Breast epithelium (tissue), 4 donors: ENCODE measurements at regions of chr9 and their contacts with region 1.

Region 1: GRCh38 chr9:82443312-82443711 is 454.7 kb downstream of the SPATA31D1 start:
- DNase-seq: no peak
- H3K4me3 ChIP-seq: no peak overlapping the region
- H3K27ac ChIP-seq: no peak overlapping the region
- H3K4me1 ChIP-seq: no peaks in the 10 kb centered on the region
- H3K27me3 ChIP-seq: no peaks in the 10 kb centered on the region
- CTCF ChIP-seq: no peak
- POLR2A ChIP-seq: no peak

Region 2: DNA sequence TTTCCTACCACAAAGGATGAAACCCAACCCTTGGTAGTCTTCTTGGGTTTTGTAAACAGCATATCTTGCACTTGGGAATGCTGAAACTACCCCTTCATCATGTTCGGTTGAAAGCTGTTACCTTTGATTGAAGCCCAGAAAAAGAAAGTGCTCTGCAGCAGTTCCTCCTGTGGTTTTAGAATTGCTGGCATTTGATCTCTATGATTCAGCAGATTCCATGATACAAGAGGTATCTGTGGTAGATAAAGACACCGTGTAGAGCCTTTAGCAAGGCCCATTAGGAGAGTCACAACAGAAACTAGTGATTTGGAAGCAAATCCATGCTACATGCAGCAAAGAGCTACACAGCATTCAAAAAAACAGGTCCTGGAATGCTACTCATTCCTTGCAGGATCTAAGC is 1311.0 kb before region 1 on chr9:
- intact Hi-C with region 1: no loop called
- DNase-seq: no peak
- H3K4me3 ChIP-seq: no peak overlapping the region
- H3K27ac ChIP-seq: no peak overlapping the region
- H3K4me1 ChIP-seq: no peaks in the 10 kb centered on the region
- H3K27me3 ChIP-seq: no peaks in the 10 kb centered on the region
- CTCF ChIP-seq: no peak
- POLR2A ChIP-seq: no peak

Region 3: DNA sequence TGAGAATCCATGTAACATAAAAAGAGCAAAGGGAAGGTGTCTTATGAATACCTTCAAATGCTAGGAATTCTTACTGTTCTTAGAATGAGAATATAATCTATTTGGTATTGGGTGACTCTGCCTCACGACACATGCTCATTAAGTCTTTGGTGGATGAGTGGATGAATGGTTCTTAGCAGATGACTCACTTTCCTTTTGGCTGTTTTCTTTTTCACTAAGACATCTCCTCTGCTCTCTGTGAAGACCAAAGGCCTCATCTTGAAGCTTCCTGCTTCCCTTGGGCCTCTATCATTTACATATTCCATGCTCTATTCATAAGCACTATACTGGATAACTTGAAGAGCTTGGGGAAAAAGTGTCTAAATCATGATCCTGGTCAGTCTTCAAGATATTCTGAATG is 13.3 kb after region 1 on chr9:
- intact Hi-C with region 1: no loop called
- DNase-seq: no peak
- H3K4me3 ChIP-seq: no peak overlapping the region
- H3K27ac ChIP-seq: no peak overlapping the region
- H3K4me1 ChIP-seq: no peaks in the 10 kb centered on the region
- H3K27me3 ChIP-seq: no peaks in the 10 kb centered on the region
- CTCF ChIP-seq: no peak
- POLR2A ChIP-seq: no peak

Region 4: GRCh38 chr9:82475584-82476301 is 32.4 kb after region 1 on chr9:
- intact Hi-C with region 1: loop called (anchors 2 kb)
- DNase-seq: no peak
- H3K4me3 ChIP-seq: no peak overlapping the region
- H3K27ac ChIP-seq: no peak overlapping the region
- H3K4me1 ChIP-seq: no peaks in the 10 kb centered on the region
- H3K27me3 ChIP-seq: no peaks in the 10 kb centered on the region
- CTCF ChIP-seq: no peak
- POLR2A ChIP-seq: no peak